ENCODE measurements at regions of chr5 and their contacts with region 1.

Region 1: DNA sequence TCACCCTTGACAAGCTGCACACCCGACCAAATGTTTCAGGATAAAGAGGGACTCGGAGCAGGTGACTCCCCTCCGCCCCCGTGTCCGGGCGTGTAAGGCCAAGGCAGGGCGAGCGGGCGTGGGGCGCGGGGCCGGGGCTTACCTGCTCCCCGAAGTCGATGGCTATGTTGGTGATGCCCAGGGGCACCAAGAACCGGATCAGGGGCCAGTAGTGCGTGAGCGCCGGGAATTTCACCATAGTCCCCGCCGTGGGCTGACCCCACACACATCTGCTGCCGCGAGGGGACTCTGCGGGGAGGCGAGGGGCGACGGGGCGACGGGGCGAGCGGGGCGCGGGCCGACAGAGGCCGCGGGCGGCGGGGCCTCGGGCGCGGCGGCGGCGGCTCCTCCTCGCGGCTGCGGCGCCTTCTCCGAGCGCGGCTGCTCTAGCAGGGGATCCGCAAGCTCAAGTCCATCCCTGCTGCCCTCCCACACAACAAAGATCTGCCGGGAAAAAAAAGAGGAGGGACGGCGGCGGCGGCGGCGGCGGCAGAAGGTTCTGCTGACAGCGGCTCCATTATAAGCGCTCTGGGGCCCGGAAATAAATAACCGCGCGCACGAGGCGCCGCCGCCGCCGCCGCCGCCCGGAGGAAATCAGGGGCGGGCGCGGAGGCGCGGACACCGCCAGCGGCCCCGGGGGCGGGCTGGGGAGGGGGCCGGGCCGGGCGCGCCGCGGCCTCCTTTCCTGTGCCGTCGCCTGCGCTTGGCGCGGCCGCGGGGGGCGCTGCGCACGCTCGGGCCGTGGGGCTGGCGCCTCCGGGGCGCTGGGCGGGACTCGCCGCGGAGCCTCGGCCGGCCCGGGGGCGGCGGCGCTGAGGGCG is at the start of gene ANKH:
- DNase-seq: peak; percentile 79
- H3K4me3 Mint-ChIP-seq: peak within 1 kb of the TSS; percentile 96
- H3K27ac Mint-ChIP-seq: peak within 1 kb of the TSS; percentile 95
- H3K4me1 Mint-ChIP-seq: peaks cover 33% of the 10 kb centered on the region
- H3K27me3 Mint-ChIP-seq: no peaks in the 10 kb centered on the region
- total RNA-seq, gene ANKH: 92.0 to 93.5 TPM

Region 2: DNA sequence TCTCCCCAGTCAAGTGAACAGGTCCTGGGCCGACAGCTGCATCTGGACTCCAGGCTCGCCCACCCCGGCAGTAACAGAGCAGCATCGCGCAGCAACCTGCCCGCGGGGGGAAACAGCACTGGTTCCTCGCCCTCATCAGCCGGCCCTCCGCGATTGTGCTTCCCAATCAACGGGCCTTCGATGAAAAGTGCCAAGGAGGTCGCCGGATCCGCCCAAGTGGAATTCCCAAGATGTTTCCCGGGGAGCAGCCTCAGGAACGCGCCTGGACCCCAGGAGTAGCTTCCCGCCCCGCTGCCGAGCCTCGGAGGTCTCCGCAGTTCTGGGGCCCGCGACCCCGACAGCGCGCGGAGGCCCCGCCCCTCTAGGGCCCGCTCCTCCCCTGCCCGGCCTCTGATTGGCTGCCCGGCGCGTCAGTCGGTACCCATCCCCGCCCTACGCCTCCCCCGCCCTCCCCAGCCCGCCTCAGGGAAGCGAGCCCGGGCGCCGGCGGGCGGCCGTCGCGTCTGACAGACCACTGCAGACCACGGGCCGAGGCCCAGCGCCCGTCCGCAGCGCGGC is 290.0 kb before region 1 on chr5 and contains the start of gene OTULINL:
- CTCF ChIA-PET with region 1: no interaction called
- intact Hi-C with region 1: loop called (anchors 5 kb)
- DNase-seq: peak; percentile 91
- H3K4me3 Mint-ChIP-seq: peak within 1 kb of the TSS; percentile 75
- H3K27ac Mint-ChIP-seq: peak within 1 kb of the TSS; percentile 70
- H3K4me1 Mint-ChIP-seq: peaks cover 26% of the 10 kb centered on the region
- H3K27me3 Mint-ChIP-seq: peaks cover 2% of the 10 kb centered on the region
- total RNA-seq, gene OTULINL: 9.1 to 10.6 TPM

Region 3: GRCh38 chr5:14727428-14727865 is 144.0 kb before region 1 on chr5:
- CTCF ChIA-PET with region 1: interaction called, 11 read pairs
- intact Hi-C with region 1: loop called (anchors 1 kb)
- DNase-seq: peak; percentile 83
- H3K4me3 Mint-ChIP-seq: no peak overlapping the region
- H3K27ac Mint-ChIP-seq: no peak overlapping the region
- H3K4me1 Mint-ChIP-seq: peaks cover 19% of the 10 kb centered on the region
- H3K27me3 Mint-ChIP-seq: no peaks in the 10 kb centered on the region

Region 4: DNA sequence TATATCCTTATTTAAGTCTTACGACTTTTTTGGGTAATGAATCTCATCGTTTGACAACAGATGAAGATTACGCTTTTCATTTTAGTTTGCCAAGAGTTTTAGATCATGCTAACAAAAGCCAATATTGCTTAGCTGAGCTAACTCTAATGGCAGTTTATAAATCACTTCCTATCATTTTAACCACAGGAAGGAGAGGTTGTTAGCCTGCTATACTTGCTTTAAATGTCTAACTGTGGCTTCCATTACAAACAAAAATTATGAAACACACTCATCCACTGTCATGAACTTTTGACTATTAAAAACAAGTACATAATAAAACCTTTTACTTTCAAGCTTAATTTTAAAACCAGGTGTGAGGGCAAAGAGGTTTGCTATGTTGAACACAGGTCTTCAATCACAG is 53.9 kb after region 1 on chr5:
- CTCF ChIA-PET with region 1: no interaction called
- intact Hi-C with region 1: loop called (anchors 1 kb)
- DNase-seq: no peak
- H3K4me3 Mint-ChIP-seq: peak overlapping the region; percentile 40
- H3K27ac Mint-ChIP-seq: peak overlapping the region; percentile 86
- H3K4me1 Mint-ChIP-seq: peaks cover 58% of the 10 kb centered on the region
- H3K27me3 Mint-ChIP-seq: no peaks in the 10 kb centered on the region

Region 5: DNA sequence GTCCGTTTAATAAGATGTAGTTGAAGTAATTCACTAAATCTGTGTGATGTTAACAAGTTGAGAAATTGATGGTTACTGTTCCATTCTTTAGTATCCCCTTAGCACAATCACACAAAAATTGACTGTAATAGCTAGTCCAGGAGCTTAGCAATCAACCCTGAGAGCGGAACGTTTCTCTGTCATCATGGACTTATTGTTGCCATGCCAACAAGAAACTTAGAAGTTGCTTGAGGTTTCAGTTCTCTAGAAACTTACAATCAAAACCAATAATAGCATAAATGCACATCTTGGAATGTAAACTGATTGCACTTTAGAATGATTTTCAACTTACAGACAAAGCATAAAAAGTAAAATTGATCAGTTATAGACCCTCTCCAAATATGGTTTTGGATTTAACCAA is 125.6 kb after region 1 on chr5:
- CTCF ChIA-PET with region 1: interaction called, 11 read pairs
- intact Hi-C with region 1: loop called (anchors 1 kb)
- DNase-seq: no peak
- H3K4me3 Mint-ChIP-seq: no peak overlapping the region
- H3K27ac Mint-ChIP-seq: no peak overlapping the region
- H3K4me1 Mint-ChIP-seq: peaks cover 14% of the 10 kb centered on the region
- H3K27me3 Mint-ChIP-seq: no peaks in the 10 kb centered on the region

Region 6: GRCh38 chr5:15026011-15026893 is 154.8 kb after region 1 on chr5:
- CTCF ChIA-PET with region 1: no interaction called
- intact Hi-C with region 1: no loop called
- DNase-seq: no peak
- H3K4me3 Mint-ChIP-seq: no peak overlapping the region
- H3K27ac Mint-ChIP-seq: no peak overlapping the region
- H3K4me1 Mint-ChIP-seq: peaks cover 3% of the 10 kb centered on the region
- H3K27me3 Mint-ChIP-seq: peaks cover 27% of the 10 kb centered on the region

Region 7: DNA sequence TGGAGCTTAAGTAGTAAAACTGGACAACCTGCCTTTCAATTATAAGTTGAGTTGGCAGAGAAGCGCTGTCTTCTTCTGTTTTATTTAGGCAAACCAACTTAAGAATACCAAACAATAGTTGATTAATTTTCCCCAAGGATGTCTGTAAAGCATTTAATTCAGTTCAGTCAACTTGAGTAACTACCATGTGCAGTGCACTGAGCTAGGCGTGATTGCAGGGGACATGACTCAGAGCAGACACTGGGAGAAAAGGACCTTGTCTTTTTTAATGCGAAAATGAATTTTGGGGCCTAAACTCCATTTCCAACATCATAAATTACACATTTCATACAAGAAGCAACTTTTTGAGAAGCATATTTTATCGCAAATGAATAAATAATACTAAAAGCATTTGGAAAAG is 694.9 kb after region 1 on chr5:
- CTCF ChIA-PET with region 1: no interaction called
- intact Hi-C with region 1: no loop called
- DNase-seq: no peak
- H3K4me3 Mint-ChIP-seq: no peak overlapping the region
- H3K27ac Mint-ChIP-seq: no peak overlapping the region
- H3K4me1 Mint-ChIP-seq: no peaks in the 10 kb centered on the region
- H3K27me3 Mint-ChIP-seq: no peaks in the 10 kb centered on the region

Region 8: DNA sequence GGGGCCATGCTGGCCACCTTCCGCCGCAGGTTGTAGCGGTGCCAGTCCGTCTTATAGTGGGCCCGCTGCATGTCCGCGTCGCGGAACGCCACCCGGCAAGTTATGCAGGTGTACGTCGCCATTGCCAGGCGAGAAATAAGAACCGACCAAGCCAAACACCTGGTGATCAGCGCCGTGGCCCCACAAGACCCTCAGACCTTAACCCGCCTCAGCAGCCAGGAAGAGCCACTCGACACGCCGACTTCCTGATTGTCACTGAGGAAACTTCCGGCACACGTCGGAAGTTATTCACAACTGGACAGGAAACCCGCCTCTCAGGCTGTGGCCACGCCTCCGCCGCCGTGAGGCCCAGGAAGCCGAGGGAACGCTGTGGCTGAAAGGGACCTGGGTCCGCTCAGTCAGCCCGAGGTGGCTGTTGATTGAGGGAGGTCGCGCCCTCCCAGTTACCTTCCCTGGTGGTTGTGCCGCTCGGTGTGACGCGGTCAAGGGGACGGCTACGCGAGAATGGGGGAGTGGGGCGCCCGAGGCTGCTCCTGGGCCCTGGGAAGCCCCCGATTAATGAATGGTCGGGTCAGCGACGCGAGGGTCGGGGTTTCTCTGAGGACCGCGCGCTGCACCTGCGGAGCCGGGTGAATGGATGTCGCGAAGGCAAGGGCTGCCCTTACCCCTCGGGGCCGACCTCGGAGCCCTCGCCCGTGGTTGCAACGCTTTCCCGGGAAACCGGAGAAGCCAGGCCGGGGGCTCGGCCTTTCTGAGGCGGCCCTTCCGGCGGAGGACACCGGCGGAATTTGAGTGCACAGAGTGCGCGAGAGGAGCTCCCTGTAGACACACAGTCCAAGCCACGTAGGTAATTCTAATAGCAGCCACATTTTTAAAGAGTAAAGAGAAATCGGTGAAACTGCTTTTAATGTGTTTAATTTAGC is 1594.4 kb after region 1 on chr5 and contains the start of gene ZNF622:
- CTCF ChIA-PET with region 1: no interaction called
- intact Hi-C with region 1: loop called (anchors 5 kb)
- DNase-seq: peak; percentile 92
- H3K4me3 Mint-ChIP-seq: peak within 1 kb of the TSS; percentile 96
- H3K27ac Mint-ChIP-seq: peak within 1 kb of the TSS; percentile 93
- H3K4me1 Mint-ChIP-seq: peaks cover 70% of the 10 kb centered on the region
- H3K27me3 Mint-ChIP-seq: no peaks in the 10 kb centered on the region
- total RNA-seq, gene ZNF622: 25.7 to 25.9 TPM

Measured in activated naive CD4-positive, alpha-beta T cell treated with anti-CD3 and anti-CD28 coated beads for 36 hours (primary cell).